Activated T-helper 1 cell treated with anti-CD3 and anti-CD28 coated beads, Interleukin-12 subunit alpha, Interleukin-12 subunit beta, Interleukin-2, Interleukin-4 antibody, amounts not matched to agents 30 ng/mL and 10 ng/mL and 1 ng/mL, durations not matched to agents 14 hours and 24 hours and 36 hours (primary cell): ENCODE measurements at regions of chr16 and their contacts with region 1.

Region 1: DNA sequence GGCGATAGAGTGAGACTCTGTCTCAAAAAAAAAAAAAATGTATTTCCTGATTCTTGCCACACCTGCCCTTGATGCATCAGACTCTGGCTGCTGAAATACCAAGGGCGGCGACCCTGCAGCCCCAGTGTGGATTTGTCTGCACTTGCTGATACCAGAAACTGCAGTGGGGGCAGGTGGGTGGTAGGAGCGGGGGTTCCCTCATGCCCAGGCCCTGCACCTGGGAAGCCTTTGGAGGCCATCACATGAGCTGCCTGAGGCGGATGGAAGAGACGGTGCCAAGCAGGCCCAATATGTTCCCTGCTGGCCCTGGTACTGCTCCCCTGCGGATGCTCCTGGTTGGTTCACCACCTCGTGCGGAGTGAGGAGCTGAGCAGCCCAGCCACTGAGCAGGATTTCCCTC is 50.6 kb downstream of the MARF1 start:
- DNase-seq: no peak
- H3K4me3 Mint-ChIP-seq: no peak overlapping the region
- H3K27ac Mint-ChIP-seq: peak overlapping the region; percentile 61
- H3K4me1 Mint-ChIP-seq: peaks cover 64% of the 10 kb centered on the region
- H3K27me3 Mint-ChIP-seq: no peaks in the 10 kb centered on the region

Region 2: DNA sequence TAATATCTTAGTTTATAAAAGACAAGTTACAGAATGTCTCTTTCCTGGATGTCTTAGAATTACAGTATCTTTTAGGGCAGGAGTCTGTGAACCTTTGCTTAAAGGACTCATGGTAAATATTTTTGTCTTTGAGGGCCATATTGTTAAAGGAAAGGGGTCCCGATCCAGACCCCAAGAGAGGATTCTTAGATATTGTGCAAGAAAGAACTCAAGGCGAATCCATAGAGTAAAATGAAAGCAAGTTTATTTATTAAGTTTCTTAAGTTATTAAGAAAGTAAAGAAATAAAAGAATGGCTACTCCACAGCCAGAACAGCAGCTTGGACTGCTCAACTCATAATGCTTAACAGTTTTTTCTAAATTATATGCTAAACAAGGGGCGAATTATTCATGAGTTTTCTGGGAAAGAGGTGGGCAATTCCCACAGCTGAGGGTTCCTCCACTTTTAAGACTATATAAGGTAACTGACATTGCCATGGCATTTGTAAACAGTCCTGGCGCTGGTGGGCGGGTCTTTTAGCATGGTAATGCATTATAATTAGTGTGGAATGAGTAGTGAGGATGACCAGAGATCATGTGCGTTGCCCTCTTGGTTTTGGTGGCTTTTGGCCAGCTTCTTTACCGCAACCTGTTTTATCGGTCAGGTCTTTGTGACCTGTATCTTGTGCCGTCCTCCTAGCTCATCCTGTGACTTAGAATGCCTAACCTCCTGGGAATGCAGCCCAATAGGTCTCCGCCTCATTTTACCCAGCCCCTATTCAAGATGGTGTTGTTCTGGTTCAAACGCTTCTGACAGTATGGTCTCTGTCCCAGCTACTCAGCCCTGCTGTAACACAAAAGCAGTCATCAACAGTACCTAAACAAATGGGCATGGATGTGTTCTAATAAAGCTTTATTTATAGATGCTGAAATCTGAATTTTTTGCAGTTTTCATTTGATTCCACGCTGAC is 104.7 kb before region 1 on chr16:
- intact Hi-C with region 1: loop called (anchors 1 kb)
- DNase-seq: no peak
- H3K4me3 Mint-ChIP-seq: no peak overlapping the region
- H3K27ac Mint-ChIP-seq: no peak overlapping the region
- H3K4me1 Mint-ChIP-seq: peaks cover 37% of the 10 kb centered on the region
- H3K27me3 Mint-ChIP-seq: no peaks in the 10 kb centered on the region

Region 3: GRCh38 chr16:15556130-15556529 is 36.2 kb before region 1 on chr16:
- intact Hi-C with region 1: loop called (anchors 1 kb)
- DNase-seq: no peak
- H3K4me3 Mint-ChIP-seq: no peak overlapping the region
- H3K27ac Mint-ChIP-seq: peak overlapping the region; percentile 23
- H3K4me1 Mint-ChIP-seq: peaks cover 31% of the 10 kb centered on the region
- H3K27me3 Mint-ChIP-seq: no peaks in the 10 kb centered on the region

Region 4: DNA sequence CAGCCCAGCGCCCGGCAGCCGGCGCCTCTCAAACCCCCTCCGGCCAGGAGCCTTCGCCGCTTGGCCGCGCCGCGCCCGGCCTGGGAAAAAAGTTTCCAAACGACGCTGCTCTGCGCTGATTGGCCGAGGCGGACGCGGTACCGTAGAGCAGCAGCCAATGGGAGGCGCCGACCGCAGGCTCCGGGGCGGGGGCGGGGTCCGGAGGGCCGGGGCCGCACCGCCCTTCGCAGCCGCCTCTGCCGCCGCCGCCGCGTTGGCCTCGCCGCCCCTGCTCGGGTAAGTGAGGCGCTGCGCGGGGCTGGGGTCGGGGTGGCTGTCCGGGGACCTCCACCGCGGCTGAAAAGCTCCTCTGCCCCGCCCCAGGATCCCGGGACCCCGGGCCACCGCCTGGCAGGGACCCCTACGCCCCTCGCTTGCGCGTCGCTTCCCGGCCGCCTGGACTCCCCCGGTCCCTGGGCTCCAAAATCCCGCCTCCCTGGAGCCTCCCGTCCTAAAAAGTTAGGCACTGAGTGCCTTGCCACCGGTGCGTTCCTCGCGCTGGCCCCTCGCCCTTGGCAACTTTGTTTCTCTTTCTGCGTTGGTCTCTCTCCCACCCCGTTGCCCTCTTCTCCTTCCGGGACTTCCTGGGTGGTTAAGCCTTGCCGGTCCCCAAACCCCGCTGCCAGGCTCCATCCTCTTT is 57.8 kb after region 1 on chr16 and contains the start of gene NDE1:
- intact Hi-C with region 1: loop called (anchors 2 kb)
- DNase-seq: peak; percentile 82
- H3K4me3 Mint-ChIP-seq: peak within 1 kb of the TSS; percentile 100
- H3K27ac Mint-ChIP-seq: peak within 1 kb of the TSS; percentile 100
- H3K4me1 Mint-ChIP-seq: peaks cover 19% of the 10 kb centered on the region
- H3K27me3 Mint-ChIP-seq: no peaks in the 10 kb centered on the region
- total RNA-seq, gene NDE1: 87.4 and 91.8 TPM in 2 replicates

Region 5: GRCh38 chr16:15835136-15835878 is 243.0 kb after region 1 on chr16:
- intact Hi-C with region 1: no loop called
- DNase-seq: no peak
- H3K4me3 Mint-ChIP-seq: no peak overlapping the region
- H3K27ac Mint-ChIP-seq: no peak overlapping the region
- H3K4me1 Mint-ChIP-seq: peaks cover 10% of the 10 kb centered on the region
- H3K27me3 Mint-ChIP-seq: peaks cover 7% of the 10 kb centered on the region